GM12878 (cell line): ENCODE measurements at regions of chr17 and their contacts with region 1.

Region 1: DNA sequence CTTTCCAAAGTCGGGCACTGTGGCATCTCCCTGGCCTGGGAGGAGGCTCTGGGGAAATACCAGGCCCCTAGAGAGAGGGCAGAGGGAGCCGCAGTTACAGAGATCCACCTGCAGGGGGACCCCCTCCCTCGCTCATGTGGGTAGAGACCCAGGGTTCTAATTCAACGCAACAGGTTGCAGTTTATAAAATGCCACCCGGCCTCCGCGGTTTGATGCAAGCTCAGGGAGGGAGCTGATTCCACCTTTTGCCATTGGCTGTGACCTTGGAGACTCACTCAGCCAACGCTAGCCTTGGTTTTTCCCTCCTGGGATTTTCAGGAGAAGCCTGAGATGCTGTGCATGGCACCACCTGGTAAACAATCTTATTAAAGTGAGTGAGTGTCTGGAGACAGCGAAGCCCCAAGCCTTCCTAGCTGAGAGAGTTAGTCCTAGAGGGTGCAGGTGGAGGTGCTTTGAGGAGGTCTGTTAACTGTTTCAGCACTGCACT is 12.1 kb downstream of the TTLL6 start:
- DNase-seq: no peak
- ATAC-seq: peak; percentile 98
- H3K4me3 ChIP-seq: no peak overlapping the region
- H3K27ac ChIP-seq: no peak overlapping the region
- H3K4me1 ChIP-seq: no peaks in the 10 kb centered on the region
- H3K27me3 ChIP-seq: no peaks in the 10 kb centered on the region; a peak in 2 of 4 replicates
- CTCF ChIP-seq: peak; percentile 89 to 95 (median 90)
- EP300 ChIP-seq: no peak
- POLR2A ChIP-seq: no peak
- RAD21 ChIP-seq: peak; percentile 93

Region 2: GRCh38 chr17:48704361-48705248 is 100.4 kb before region 1 on chr17:
- CTCF ChIA-PET with region 1: no interaction called
- POLR2A ChIA-PET with region 1: no interaction called
- RAD21 ChIA-PET with region 1: no interaction called
- SMC1A ChIA-PET with region 1: no interaction called
- in situ Hi-C with region 1: no loop called
- intact Hi-C with region 1: no loop called
- DNase-seq: no peak
- ATAC-seq: no peak
- H3K4me3 ChIP-seq: no peak overlapping the region
- H3K27ac ChIP-seq: no peak overlapping the region
- H3K4me1 ChIP-seq: no peaks in the 10 kb centered on the region
- H3K27me3 ChIP-seq: peaks cover 0 to 2% of the 10 kb centered on the region in 2 experiments; a peak in 3 of 4 replicates
- CTCF ChIP-seq: no peak
- EP300 ChIP-seq: no peak
- POLR2A ChIP-seq: no peak
- RAD21 ChIP-seq: no peak

Region 3: DNA sequence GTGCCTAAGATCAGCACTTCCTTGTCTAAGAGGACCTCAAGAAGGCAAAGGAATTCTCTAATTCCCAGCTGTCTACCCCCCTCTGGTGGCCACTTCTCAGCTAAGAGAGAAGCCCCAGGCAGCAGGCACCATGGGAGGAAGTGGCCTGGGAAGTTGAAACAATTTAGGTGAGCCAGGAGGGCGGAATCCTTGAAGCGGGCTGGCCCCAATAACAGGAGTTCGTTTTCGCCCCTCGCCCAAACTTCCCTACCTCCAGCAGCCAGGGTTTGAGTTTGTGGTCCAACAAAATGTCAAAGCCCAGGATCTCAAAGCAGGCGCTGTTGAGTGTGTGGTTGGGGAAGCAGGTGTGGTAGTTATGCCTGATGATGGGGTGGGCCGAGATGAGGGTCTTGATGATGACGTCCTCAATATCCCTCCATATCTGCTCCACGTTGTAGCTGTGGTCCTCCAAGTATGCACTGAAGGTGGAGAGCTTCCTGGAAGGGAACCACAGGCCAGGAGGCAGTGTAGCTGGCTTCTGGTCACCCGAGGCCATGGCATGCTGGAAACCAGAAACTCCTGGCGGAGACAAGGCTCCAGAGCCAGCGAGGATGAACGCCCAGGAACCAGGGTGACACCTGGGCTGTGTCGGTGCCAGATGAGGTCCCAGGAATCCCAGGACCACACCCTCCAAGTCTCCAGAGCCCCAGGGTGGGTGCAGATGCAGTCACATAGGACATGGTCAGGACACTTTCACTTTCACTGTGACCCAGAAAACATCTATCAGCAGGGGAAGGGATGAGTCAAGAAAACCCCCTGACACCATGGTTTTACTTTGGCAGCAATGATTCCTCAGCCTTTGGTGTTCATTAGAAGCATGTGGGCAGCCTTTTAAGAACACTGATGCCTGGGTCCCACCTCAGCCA is 13.6 kb before region 1 on chr17:
- CTCF ChIA-PET with region 1: interaction called, 11 read pairs
- POLR2A ChIA-PET with region 1: no interaction called
- RAD21 ChIA-PET with region 1: interaction called, 4 read pairs
- SMC1A ChIA-PET with region 1: interaction called, 4 read pairs
- in situ Hi-C with region 1: no loop called
- intact Hi-C with region 1: no loop called
- DNase-seq: peak; percentile 57
- ATAC-seq: peak; percentile 93
- H3K4me3 ChIP-seq: no peak overlapping the region
- H3K27ac ChIP-seq: no peak overlapping the region
- H3K4me1 ChIP-seq: peaks cover 11% of the 10 kb centered on the region
- H3K27me3 ChIP-seq: no peaks in the 10 kb centered on the region; a peak in 1 of 4 replicates
- CTCF ChIP-seq: peak; percentile 49 to 57 (median 54)
- EP300 ChIP-seq: peak in 1 of 2 experiments; percentile 30; a peak in 1 of 4 replicates
- POLR2A ChIP-seq: no peak
- RAD21 ChIP-seq: peak; percentile 58

Region 4: DNA sequence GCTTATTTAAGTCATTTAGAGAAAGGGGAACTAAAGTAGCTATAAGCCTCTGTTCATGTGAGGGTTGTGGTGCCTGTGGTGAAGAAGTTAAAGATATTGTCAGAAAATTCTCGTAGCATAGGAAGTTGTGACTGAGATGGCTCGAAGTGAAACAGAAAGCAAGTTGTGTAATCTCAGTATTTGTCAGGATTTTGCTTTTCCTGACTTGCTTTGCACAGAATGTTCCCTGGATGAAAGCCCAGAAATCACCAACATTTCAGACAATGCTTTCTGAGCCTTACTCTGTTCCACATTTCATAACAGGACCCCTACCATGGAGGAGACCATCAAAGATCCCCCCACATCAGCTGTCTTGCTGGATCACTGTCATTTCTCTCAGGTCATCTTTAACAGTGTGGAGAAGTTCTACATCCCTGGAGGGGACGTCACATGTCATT is 36.4 kb after region 1 on chr17:
- CTCF ChIA-PET with region 1: interaction called, 132 read pairs
- POLR2A ChIA-PET with region 1: no interaction called
- RAD21 ChIA-PET with region 1: interaction called, 4 read pairs
- SMC1A ChIA-PET with region 1: interaction called, 6 read pairs
- in situ Hi-C with region 1: no loop called
- intact Hi-C with region 1: no loop called
- DNase-seq: peak; percentile 83
- ATAC-seq: peak; percentile 91
- H3K4me3 ChIP-seq: peak overlapping the region; percentile 60
- H3K27ac ChIP-seq: peak overlapping the region; percentile 71
- H3K4me1 ChIP-seq: peaks cover 33% of the 10 kb centered on the region
- H3K27me3 ChIP-seq: no peaks in the 10 kb centered on the region
- CTCF ChIP-seq: no peak
- EP300 ChIP-seq: peak in 1 of 2 experiments; percentile 77; a peak in 1 of 4 replicates
- POLR2A ChIP-seq: no peak
- RAD21 ChIP-seq: no peak